Activated CD4-positive, alpha-beta T cell treated with anti-CD3 and anti-CD28 coated beads, Interleukin-2, amount 10 ng/mL, durations not matched to agents 24 days and 14 days (primary cell): ENCODE measurements at regions of chr17 and their contacts with region 1.

Region 1: DNA sequence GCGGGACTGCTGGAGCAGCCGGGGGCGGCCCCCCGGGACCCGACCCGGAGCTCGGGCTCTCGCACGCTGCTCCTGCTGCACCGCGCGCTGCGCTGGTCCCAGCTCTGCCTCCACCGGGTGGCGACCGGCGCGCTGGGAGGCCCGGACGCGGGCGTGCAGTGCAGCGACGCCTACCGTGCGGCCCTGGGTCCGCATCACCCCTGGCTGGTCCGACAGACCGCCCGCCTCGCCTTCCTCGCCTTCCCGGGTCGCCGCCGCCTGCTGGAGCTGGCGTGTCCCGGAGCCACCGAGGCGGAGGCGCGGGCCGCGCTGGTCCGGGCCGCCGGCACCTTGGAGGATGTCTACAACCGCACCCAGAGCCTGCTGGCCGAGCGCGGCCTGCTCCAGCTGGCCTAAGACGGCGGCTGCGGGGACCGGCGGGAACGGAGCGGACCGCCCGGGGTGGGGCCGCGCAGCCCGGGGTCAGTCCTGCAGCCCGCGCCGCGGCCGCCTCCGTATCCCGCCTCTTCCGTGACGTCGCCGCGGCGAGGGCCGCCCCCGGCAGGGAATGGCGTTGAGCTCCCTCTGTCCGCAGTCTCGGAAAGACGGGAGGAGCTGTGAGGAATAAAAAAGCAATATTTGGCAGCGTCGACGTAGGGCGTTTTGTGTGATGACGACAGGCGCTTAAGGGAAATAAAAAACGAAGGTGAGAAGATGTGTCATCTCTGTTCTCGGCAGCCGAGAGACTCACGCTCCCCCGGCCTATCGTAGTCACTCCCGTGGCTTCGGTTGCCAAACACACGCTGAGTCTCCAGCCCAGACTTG is 1.3 kb downstream of the GLTPD2 start:
- DNase-seq: peak; percentile 96
- H3K4me3 Mint-ChIP-seq: peak overlapping the region; percentile 91
- H3K27ac Mint-ChIP-seq: peak overlapping the region; percentile 97
- H3K4me1 Mint-ChIP-seq: peaks cover 15% of the 10 kb centered on the region
- H3K27me3 Mint-ChIP-seq: peaks cover 36% of the 10 kb centered on the region

Region 2: GRCh38 chr17:4709794-4710692 is 80.1 kb before region 1 on chr17 and contains the start of gene ARRB2:
- intact Hi-C with region 1: loop called (anchors 1 kb)
- DNase-seq: peak; percentile 99
- H3K4me3 Mint-ChIP-seq: peak within 1 kb of the TSS; percentile 96
- H3K27ac Mint-ChIP-seq: peak within 1 kb of the TSS; percentile 99
- H3K4me1 Mint-ChIP-seq: peaks cover 51% of the 10 kb centered on the region
- H3K27me3 Mint-ChIP-seq: no peaks in the 10 kb centered on the region
- total RNA-seq, gene ARRB2: 189 and 193 TPM in 2 replicates

Region 3: DNA sequence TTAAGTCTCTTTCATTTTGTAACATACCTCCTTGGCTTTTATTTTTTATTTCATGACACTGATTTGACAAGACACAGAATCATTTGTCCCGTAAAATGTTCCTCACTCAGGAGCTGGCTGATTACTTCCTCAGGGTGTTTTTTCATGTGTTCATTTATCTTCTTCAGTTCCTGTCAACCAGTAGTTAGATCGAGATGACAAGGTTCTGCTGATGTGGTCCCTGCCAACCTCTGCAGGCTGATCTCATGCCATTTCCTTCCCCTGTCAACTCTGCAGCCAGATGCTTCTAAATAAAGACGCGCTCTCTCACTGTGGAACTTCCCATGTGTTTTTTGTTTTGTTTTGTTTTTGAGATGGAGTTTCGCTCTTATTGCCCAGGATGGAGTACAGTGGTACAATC is 42.3 kb before region 1 on chr17:
- intact Hi-C with region 1: loop called (anchors 5 kb)
- DNase-seq: peak; percentile 82
- H3K4me3 Mint-ChIP-seq: peak overlapping the region; percentile 60
- H3K27ac Mint-ChIP-seq: peak overlapping the region; percentile 69
- H3K4me1 Mint-ChIP-seq: peaks cover 19% of the 10 kb centered on the region
- H3K27me3 Mint-ChIP-seq: peaks cover 33% of the 10 kb centered on the region

Region 4: GRCh38 chr17:4833178-4833940 is 43.3 kb after region 1 on chr17 and contains the start of gene MINK1:
- intact Hi-C with region 1: loop called (anchors 1 kb)
- DNase-seq: peak; percentile 97
- H3K4me3 Mint-ChIP-seq: peak within 1 kb of the TSS; percentile 90
- H3K27ac Mint-ChIP-seq: peak within 1 kb of the TSS; percentile 95
- H3K4me1 Mint-ChIP-seq: peaks cover 33% of the 10 kb centered on the region
- H3K27me3 Mint-ChIP-seq: peaks cover 2% of the 10 kb centered on the region
- total RNA-seq, gene MINK1: 56.1 and 59.7 TPM in 2 replicates

Region 5: DNA sequence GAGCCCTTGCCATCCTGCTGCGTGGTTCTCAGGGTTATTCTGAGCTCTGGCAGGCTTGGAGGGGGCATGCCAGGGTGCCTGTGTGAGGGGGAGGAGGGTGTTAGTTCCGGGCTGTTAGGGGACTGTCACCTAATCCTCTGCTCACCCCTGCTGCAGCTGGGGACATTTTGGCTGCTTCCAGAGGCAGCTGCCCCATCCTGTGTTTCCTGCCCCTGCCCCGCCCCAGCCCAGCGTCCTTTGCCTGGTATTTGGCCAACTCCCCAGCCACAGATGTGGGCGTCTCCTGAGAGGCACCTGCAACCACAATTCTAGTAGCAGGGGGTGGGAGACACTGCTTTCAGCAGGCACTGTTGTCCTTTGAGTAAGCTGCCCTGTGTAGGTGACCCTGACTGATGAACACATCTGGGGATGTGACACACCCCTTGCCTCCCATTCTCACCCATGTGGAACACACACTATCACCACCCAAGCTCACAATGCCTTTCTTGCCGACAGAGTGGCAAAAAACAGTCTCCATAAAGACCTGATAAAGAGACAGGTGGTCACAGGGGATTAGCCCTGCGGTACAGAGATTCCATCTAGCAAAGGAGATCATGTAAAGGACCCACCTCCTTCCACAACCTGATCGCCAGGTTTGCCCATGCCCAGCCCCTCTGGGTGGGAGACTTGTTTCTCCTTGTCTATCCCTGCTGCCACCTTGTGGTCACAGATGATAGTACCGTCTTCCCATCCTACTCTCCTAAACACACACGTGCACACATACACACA is 113.1 kb after region 1 on chr17 and contains the start of gene CHRNE:
- intact Hi-C with region 1: loop called (anchors 2 kb)
- DNase-seq: peak; percentile 93
- H3K4me3 Mint-ChIP-seq: peak within 1 kb of the TSS; percentile 30
- H3K27ac Mint-ChIP-seq: peak within 1 kb of the TSS; percentile 30
- H3K4me1 Mint-ChIP-seq: peaks cover 26% of the 10 kb centered on the region
- H3K27me3 Mint-ChIP-seq: peaks cover 6% of the 10 kb centered on the region
- total RNA-seq, gene CHRNE: 0.42 and 0.64 TPM in 2 replicates